GM23248 (cell line): ENCODE measurements at regions of chr18 and their contacts with region 1.

Region 1: DNA sequence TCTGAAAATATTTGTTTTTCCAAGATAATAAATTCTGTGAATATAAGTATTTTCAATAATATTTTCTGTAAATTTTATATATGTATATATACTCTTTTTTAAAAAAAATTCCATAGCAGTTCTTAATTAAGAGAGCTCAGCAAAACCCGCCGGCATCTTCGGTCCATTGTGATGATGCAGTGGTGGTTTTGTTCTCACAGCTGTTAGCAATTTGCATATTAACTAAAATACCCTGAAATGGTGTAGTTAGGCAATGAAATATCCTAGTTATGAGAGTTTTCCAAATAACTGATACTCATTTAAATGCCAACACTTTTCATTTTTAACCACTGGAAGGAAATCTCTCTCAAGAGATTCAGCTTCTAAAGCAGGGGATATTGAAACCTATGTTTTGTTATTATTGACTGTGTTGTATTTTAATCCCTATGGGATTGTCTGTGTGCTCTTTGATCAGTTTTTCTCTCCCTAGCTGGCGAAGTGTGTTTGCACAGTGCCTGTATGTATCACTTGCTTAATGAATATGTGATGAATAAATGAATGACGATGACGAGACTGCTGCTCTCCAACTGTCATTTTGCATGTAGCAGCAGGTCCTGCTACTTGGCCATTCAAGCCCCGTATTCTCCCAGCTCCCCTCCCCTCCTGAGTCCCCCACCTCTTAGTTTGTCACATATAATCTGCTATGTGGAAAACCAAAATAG is 42.4 kb downstream of the PSMG2 start:
- DNase-seq: peak; percentile 76
- H3K4me3 ChIP-seq: peak overlapping the region; percentile 12; the same call in 1 of the 2 replicates
- H3K27ac ChIP-seq: peak overlapping the region; percentile 11; the same call in 1 of the 2 replicates
- H3K4me1 ChIP-seq: peaks cover 45% of the 10 kb centered on the region
- H3K27me3 ChIP-seq: no peaks in the 10 kb centered on the region

Region 2: DNA sequence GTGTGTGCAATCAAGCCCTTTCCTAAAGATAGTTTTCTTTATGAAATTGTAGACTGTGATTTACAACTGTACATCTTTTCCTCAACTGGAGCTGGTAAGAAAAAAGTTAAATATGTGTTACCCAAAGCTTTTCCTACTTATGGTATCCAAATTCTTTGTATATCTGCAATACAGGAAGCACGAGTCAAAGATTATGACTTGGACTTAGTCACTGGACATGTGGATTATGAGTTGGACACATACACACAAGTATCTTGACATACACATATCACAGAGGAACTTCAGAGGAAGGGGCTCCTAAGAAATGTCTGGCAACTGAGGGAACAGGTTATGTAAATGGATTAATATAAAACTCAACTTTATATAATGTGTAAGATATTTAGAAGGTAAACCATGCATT is 302.3 kb before region 1 on chr18:
- in situ Hi-C with region 1: no loop called
- DNase-seq: peak; percentile 54
- H3K4me3 ChIP-seq: no peak overlapping the region
- H3K27ac ChIP-seq: no peak overlapping the region
- H3K4me1 ChIP-seq: peaks cover 5% of the 10 kb centered on the region; the same call in 1 of the 2 replicates
- H3K27me3 ChIP-seq: no peaks in the 10 kb centered on the region

Region 3: GRCh38 chr18:12890506-12890905 is 145.3 kb after region 1 on chr18:
- in situ Hi-C with region 1: loop called (anchors 5 kb)
- DNase-seq: peak; percentile 34
- H3K4me3 ChIP-seq: no peak overlapping the region
- H3K27ac ChIP-seq: no peak overlapping the region
- H3K4me1 ChIP-seq: no peaks in the 10 kb centered on the region
- H3K27me3 ChIP-seq: no peaks in the 10 kb centered on the region